ENCODE measurements at regions of chr3 and their contacts with region 1.

Region 1: GRCh38 chr3:132034486-132035464 is at the start of gene CPNE4:
- DNase-seq: peak; percentile 87
- H3K4me3 Mint-ChIP-seq: peak within 1 kb of the TSS; percentile 73
- H3K27ac Mint-ChIP-seq: no peak within 1 kb of the TSS
- H3K4me1 Mint-ChIP-seq: peaks cover 10% of the 10 kb centered on the region
- H3K27me3 Mint-ChIP-seq: peaks cover 44% of the 10 kb centered on the region
- CTCF ChIP-seq: peak; percentile 91
- total RNA-seq, gene CPNE4: not detected in 2 replicates

Region 2: GRCh38 chr3:131868203-131868602 is 166.6 kb before region 1 on chr3:
- CTCF ChIA-PET with region 1: no interaction called
- POLR2A ChIA-PET with region 1: no interaction called
- intact Hi-C with region 1: no loop called
- DNase-seq: no peak
- H3K4me3 Mint-ChIP-seq: no peak overlapping the region
- H3K27ac Mint-ChIP-seq: no peak overlapping the region
- H3K4me1 Mint-ChIP-seq: no peaks in the 10 kb centered on the region
- H3K27me3 Mint-ChIP-seq: no peaks in the 10 kb centered on the region
- CTCF ChIP-seq: no peak

Region 3: DNA sequence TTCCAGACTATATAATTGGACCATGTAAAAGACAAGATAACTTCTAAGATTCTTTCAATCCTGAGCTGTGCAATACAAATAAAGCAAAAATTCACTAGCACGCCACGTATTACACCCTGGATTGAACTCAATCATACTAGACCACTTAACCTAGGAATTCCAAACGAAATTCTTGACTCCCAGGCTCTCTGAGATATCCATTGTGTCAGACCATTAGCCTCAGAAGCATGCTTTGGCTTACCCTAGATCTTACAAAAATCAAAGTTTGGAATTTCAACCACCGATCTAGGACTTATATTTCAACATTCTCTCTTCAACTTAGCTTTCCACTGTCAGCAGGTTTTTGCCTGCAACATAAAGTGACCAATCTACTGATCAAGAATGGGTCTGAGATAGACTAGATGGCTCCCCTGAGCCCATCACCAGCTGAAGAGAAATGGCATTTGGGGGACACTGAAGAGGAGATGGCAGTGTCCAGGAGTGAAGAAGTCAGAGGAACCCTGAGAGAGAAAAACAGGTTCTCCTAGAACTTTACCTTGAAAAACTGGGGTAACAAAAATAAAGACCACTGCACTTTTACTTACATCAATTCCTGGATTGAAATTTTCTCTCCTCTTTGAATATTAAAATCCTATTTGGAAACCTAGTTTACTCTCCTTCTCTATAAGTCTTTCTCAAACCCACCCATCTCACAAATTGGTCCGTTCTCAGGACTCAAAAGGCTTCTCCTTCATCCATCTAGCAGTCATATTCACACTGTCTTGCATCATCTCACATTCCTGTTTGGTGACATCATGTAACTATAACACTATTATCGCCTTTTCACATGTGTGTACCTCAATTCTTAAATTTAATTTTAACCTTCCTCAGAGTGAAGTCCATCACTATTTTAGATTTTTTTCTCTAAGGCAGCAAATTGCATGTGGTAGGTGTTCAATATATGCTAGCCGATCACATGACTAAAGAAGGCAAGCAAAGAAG is 18.4 kb before region 1 on chr3:
- CTCF ChIA-PET with region 1: interaction called, 49 read pairs
- POLR2A ChIA-PET with region 1: interaction called, 5 read pairs
- intact Hi-C with region 1: no loop called
- DNase-seq: peak; percentile 62
- H3K4me3 Mint-ChIP-seq: no peak overlapping the region
- H3K27ac Mint-ChIP-seq: no peak overlapping the region
- H3K4me1 Mint-ChIP-seq: peaks cover 13% of the 10 kb centered on the region
- H3K27me3 Mint-ChIP-seq: peaks cover 63% of the 10 kb centered on the region
- CTCF ChIP-seq: no peak

Region 4: DNA sequence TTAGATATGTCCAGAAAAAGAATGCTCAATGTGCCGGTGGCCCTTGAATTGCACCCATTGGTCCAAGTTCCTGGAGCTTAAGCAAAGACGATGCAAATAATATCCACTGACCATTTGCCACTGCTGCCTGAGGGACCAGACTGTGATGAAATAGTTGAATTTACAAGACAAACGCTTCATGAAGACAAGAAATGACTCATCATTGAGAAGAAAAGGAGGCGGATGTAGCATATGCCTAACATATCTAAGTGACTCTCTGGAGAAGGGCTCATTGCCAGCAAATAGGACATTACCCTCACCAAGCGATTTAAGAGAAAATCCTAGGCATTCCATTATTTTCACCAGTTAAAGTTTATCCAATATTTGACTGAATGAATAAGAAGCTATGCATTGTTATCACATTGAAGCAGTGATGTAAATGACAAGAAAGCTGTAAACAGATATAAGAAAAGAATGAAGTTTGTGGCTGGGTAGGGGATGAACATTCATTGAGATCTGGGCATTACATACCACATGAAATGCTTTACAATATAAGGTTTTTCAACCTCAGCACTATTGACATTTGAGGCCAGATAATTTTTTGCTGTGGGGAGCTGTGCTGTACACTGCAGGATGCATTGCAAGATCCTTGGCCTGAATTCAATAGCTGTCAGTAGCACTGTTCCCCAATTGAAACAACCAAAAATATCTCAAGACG is 49.0 kb after region 1 on chr3:
- CTCF ChIA-PET with region 1: interaction called, 15 read pairs
- POLR2A ChIA-PET with region 1: no interaction called
- intact Hi-C with region 1: no loop called
- DNase-seq: peak; percentile 90
- H3K4me3 Mint-ChIP-seq: no peak overlapping the region
- H3K27ac Mint-ChIP-seq: no peak overlapping the region
- H3K4me1 Mint-ChIP-seq: peaks cover 8% of the 10 kb centered on the region
- H3K27me3 Mint-ChIP-seq: no peaks in the 10 kb centered on the region
- CTCF ChIP-seq: no peak

Region 5: DNA sequence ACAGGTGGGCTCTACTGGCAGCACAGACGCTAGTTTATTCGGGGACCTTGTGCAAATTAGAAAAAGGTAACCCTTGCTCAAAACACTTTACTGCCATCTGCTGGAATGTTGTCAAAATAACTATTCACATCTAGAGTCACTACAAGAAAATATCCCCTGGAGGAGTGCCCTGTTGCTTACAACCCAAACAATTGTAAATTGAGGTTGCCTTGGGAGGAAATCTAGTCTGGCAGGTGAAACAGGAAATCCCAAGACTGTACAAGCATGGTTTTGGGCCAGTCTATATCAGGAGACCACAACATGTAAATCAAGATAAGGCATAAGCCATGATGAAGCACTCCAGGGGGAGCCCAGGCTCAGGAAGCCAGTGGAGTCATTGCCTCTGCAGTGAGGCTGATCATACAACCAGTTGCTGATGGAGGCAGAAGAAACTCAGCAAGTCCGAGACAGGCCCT is 145.6 kb after region 1 on chr3:
- CTCF ChIA-PET with region 1: interaction called, 447 read pairs
- POLR2A ChIA-PET with region 1: interaction called, 3 read pairs
- intact Hi-C with region 1: loop called (anchors 1 kb)
- DNase-seq: peak; percentile 72
- H3K4me3 Mint-ChIP-seq: no peak overlapping the region
- H3K27ac Mint-ChIP-seq: no peak overlapping the region
- H3K4me1 Mint-ChIP-seq: no peaks in the 10 kb centered on the region
- H3K27me3 Mint-ChIP-seq: no peaks in the 10 kb centered on the region
- CTCF ChIP-seq: peak; percentile 54

Region 6: DNA sequence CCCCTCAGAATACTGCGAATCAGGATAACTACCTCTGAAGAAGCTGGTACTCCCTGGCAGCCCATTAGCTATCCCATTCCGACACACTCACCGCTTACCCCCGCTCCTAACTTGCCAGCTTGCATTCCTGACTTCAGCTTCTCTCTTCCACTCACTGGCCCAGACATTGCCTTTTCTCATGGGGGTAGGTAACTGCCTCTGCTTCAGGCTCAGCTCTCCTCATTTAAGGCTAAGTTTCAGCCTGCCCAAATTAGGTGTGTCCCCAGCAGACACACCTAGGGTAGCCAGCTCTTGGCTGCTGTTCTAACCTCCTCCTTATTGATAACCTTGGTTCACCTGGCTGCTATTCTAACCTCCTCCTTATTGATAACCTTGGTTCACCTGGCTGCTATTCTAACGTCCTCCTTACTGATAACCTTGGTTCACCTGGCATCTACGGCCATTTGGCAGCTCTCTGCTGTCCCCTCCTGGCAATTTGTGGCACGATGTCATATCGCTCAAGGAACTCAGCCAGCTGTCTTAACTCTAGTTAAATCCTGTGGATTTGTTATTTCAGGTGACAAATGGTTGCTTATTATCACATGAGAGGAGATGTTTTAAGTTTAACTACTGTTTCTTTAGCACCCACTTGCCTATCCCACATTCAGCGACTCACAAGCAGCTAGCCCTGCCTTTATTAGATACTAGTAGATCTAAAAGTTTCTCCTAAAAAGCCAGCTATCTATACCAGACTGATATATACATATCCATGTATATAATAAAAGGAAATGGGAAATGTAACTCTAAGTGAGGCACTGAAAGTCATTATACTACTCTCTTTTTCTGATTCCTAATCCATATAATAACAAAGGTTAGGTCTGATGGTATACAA is 175.9 kb after region 1 on chr3:
- CTCF ChIA-PET with region 1: interaction called, 81 read pairs
- POLR2A ChIA-PET with region 1: interaction called, 3 read pairs
- intact Hi-C with region 1: no loop called
- DNase-seq: peak; percentile 54
- H3K4me3 Mint-ChIP-seq: no peak overlapping the region
- H3K27ac Mint-ChIP-seq: no peak overlapping the region
- H3K4me1 Mint-ChIP-seq: peaks cover 16% of the 10 kb centered on the region
- H3K27me3 Mint-ChIP-seq: peaks cover 13% of the 10 kb centered on the region
- CTCF ChIP-seq: peak; percentile 72

Region 7: GRCh38 chr3:132399054-132399929 is 364.5 kb after region 1 on chr3:
- CTCF ChIA-PET with region 1: interaction called, 14 read pairs
- POLR2A ChIA-PET with region 1: no interaction called
- intact Hi-C with region 1: loop called (anchors 1 kb)
- DNase-seq: peak; percentile 66
- H3K4me3 Mint-ChIP-seq: no peak overlapping the region
- H3K27ac Mint-ChIP-seq: no peak overlapping the region
- H3K4me1 Mint-ChIP-seq: no peaks in the 10 kb centered on the region
- H3K27me3 Mint-ChIP-seq: no peaks in the 10 kb centered on the region
- CTCF ChIP-seq: peak; percentile 88

Measured in MCF 10A (cell line).